GM12878 (cell line): ENCODE measurements at regions of chr6 and their contacts with region 1.

Region 1: GRCh38 chr6:73515204-73515655 is 5.6 kb downstream of the EEF1A1 start:
- DNase-seq: no peak
- ATAC-seq: peak; percentile 54
- H3K4me3 ChIP-seq: no peak overlapping the region
- H3K27ac ChIP-seq: peak overlapping the region; percentile 73
- H3K4me1 ChIP-seq: peaks cover 17% of the 10 kb centered on the region
- H3K27me3 ChIP-seq: no peaks in the 10 kb centered on the region
- CTCF ChIP-seq: no peak
- EP300 ChIP-seq: peak in 1 of 2 experiments; percentile 35; a peak in 1 of 4 replicates
- POLR2A ChIP-seq: peak; percentile 66; the same call in 1 of the 2 replicates
- RAD21 ChIP-seq: no peak

Region 2: GRCh38 chr6:73240730-73241129 is 274.5 kb before region 1 on chr6:
- CTCF ChIA-PET with region 1: no interaction called
- POLR2A ChIA-PET with region 1: no interaction called
- RAD21 ChIA-PET with region 1: no interaction called
- SMC1A ChIA-PET with region 1: no interaction called
- in situ Hi-C with region 1: no loop called
- intact Hi-C with region 1: no loop called
- DNase-seq: no peak
- ATAC-seq: no peak
- H3K4me3 ChIP-seq: no peak overlapping the region
- H3K27ac ChIP-seq: no peak overlapping the region
- H3K4me1 ChIP-seq: no peaks in the 10 kb centered on the region
- H3K27me3 ChIP-seq: no peaks in the 10 kb centered on the region
- CTCF ChIP-seq: no peak
- EP300 ChIP-seq: no peak
- POLR2A ChIP-seq: no peak
- RAD21 ChIP-seq: no peak

Region 3: DNA sequence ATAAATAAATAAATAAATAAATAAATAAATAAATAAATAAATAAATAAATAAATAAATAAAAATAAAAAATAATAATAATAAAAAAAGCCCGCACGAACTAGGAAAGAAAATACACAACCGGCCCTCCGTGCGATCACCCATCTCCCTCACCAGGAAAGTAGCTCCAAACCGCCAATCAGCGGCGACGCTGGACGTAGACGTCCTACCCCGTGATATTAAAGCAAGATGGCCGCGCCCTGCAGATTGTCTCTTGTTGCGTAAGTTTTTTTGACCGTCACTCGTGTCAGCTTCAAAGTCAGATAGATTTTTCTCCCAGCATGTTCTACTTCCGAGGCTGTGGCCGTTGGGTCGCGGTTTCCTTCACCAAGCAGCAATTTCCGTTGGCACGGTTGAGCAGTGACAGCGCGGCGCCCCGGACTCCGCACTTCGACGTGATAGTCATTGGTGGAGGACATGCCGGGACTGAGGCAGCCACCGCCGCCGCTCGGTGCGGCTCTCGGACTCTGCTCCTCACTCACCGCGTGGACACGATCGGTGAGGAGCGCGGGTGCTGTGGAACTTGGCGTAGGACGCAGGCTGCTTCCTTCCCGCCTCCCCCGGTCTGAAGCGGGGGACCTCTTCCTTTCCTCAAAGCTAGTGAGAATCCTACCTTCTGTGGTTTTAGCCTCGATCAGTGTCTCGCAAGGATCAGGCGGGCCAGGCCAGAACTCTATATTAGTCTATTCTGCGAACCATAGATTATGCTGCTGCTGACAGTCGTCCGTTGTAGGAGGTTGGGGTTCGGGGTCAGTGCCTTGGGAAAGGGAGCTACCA is 53.5 kb before region 1 on chr6 and contains the start of gene MTO1:
- CTCF ChIA-PET with region 1: interaction called, 16 read pairs
- POLR2A ChIA-PET with region 1: interaction called, 17 read pairs
- RAD21 ChIA-PET with region 1: interaction called, 9 read pairs
- SMC1A ChIA-PET with region 1: interaction called, 21 read pairs
- in situ Hi-C with region 1: no loop called
- intact Hi-C with region 1: no loop called
- DNase-seq: no peak
- ATAC-seq: peak; percentile 96
- H3K4me3 ChIP-seq: peak within 1 kb of the TSS; percentile 92
- H3K27ac ChIP-seq: peak within 1 kb of the TSS; percentile 87
- H3K4me1 ChIP-seq: peaks cover 10% of the 10 kb centered on the region
- H3K27me3 ChIP-seq: no peaks in the 10 kb centered on the region
- CTCF ChIP-seq: no peak
- EP300 ChIP-seq: no peak
- POLR2A ChIP-seq: peak; percentile 89
- RAD21 ChIP-seq: no peak
- polyA plus RNA-seq, gene MTO1: 24.8 to 28.0 TPM

Region 4: GRCh38 chr6:73503027-73503772 is 12.0 kb before region 1 on chr6:
- CTCF ChIA-PET with region 1: interaction called, 6 read pairs
- POLR2A ChIA-PET with region 1: no interaction called
- RAD21 ChIA-PET with region 1: interaction called, 3 read pairs
- SMC1A ChIA-PET with region 1: interaction called, 18 read pairs
- in situ Hi-C with region 1: no loop called
- intact Hi-C with region 1: no loop called
- DNase-seq: no peak
- ATAC-seq: no peak; the same call in 2 of the 3 replicates
- H3K4me3 ChIP-seq: no peak overlapping the region
- H3K27ac ChIP-seq: no peak overlapping the region
- H3K4me1 ChIP-seq: no peaks in the 10 kb centered on the region
- H3K27me3 ChIP-seq: no peaks in the 10 kb centered on the region
- CTCF ChIP-seq: no peak
- EP300 ChIP-seq: no peak
- POLR2A ChIP-seq: no peak
- RAD21 ChIP-seq: no peak

Region 5: GRCh38 chr6:73585566-73586415 is 70.6 kb after region 1 on chr6:
- CTCF ChIA-PET with region 1: interaction called, 16 read pairs
- POLR2A ChIA-PET with region 1: interaction called, 55 read pairs
- RAD21 ChIA-PET with region 1: interaction called, 49 read pairs
- SMC1A ChIA-PET with region 1: interaction called, 43 read pairs
- in situ Hi-C with region 1: no loop called
- intact Hi-C with region 1: no loop called
- DNase-seq: peak; percentile 66
- ATAC-seq: peak; percentile 87
- H3K4me3 ChIP-seq: peak overlapping the region; percentile 29
- H3K27ac ChIP-seq: peak overlapping the region; percentile 95
- H3K4me1 ChIP-seq: peaks cover 18% of the 10 kb centered on the region
- H3K27me3 ChIP-seq: no peaks in the 10 kb centered on the region
- CTCF ChIP-seq: no peak
- EP300 ChIP-seq: peak in 1 of 2 experiments; percentile 39; a peak in 1 of 4 replicates
- POLR2A ChIP-seq: no peak
- RAD21 ChIP-seq: no peak

Region 6: DNA sequence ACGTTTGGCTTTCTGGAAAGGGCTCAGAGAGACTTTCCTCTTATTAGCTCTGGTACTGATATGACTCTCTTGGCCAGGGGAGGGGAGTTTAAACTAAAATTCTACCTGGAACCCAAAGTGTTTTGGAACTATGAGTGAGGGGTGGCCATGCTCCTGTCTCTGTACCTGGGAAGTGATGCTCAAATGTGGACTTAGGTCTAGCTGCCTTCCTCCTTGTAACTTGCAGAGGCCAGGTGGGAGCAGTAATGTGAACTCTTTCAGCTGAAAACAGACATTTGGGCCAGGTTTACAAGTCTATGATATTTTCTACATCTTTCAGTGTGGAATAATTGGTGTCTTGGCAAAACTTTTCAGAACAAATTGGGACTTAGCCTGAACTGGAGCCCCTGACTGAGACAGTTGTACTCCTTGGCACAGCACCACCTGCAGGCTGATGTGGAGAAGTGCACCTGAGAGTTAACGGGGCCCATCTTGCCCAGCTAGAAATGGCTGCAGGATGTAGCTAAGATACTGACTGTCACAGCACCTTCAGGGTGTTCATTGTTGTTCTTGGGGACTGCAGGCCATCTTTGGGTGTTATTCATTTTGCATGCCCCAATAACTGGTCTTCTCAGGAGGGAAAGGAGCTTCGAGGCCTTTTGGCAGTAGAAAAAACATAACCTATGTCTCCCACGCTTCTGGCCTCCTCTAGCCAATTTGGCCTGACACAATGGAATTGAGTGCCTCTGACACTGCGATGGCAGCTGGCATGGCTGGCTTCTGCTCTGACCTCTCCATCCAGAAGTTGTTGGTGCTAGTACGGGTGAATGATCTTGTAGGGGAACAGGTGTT is 217.8 kb after region 1 on chr6:
- CTCF ChIA-PET with region 1: interaction called, 3 read pairs
- POLR2A ChIA-PET with region 1: no interaction called
- RAD21 ChIA-PET with region 1: no interaction called
- SMC1A ChIA-PET with region 1: interaction called, 4 read pairs
- in situ Hi-C with region 1: no loop called
- intact Hi-C with region 1: loop called (anchors 1 kb)
- DNase-seq: peak; percentile 31
- ATAC-seq: peak; percentile 90
- H3K4me3 ChIP-seq: no peak overlapping the region
- H3K27ac ChIP-seq: no peak overlapping the region
- H3K4me1 ChIP-seq: peaks cover 4% of the 10 kb centered on the region
- H3K27me3 ChIP-seq: no peaks in the 10 kb centered on the region
- CTCF ChIP-seq: peak; percentile 86 to 95 (median 92)
- EP300 ChIP-seq: no peak
- POLR2A ChIP-seq: no peak
- RAD21 ChIP-seq: peak; percentile 85